B cell (primary cell): ENCODE measurements at regions of chr19 and their contacts with region 1.

Region 1: DNA sequence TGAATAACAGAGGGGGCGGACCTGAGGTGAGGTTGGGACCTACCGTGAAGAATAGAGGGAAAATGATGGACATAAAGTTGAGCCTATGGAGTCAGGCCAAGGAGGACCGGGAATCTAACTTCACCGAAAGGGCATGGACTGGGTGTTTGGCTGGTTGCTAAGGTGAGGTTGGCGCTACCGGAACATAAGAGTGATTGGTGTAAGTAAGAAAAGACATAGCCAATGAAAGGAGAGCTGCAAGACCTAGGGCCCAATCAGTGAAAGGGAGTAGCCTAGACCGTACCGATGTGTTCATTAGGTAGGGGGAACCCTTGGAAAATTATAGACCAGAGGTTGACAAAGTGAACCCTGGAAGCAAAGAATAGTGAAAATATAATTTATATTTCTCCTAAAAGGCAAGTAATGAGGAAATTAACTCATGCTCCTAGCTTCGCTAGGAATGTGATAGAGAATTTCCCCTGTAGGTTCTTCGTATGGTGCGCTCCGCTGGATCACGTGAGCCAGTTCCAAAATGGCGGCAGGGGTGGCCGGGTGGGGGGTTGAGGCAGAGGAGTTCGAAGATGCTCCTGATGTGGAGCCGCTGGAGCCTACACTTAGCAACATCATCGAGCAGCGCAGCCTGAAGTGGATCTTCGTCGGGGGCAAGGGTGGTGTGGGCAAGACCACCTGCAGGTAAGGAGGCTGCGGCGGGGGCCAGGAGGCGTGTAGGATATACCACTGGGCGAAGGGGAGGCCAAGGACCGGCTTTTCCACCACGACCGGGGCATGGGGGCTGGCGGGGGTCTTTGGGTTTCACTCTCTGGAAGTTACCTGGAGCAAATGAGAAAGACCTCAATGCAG is at the start of gene GET3:
- DNase-seq: peak; percentile 93
- ATAC-seq: peak; percentile 76
- H3K4me3 ChIP-seq: peak within 1 kb of the TSS; percentile 67 to 93 (median 86)
- H3K4me3 Mint-ChIP-seq: peak within 1 kb of the TSS; percentile 100
- H3K27ac ChIP-seq: peak within 1 kb of the TSS; percentile 72 to 94
- H3K27ac Mint-ChIP-seq: peak within 1 kb of the TSS; percentile 99
- H3K4me1 ChIP-seq: peaks cover 36 to 43% of the 10 kb centered on the region in 2 donors
- H3K4me1 Mint-ChIP-seq: peaks cover 39% of the 10 kb centered on the region
- H3K27me3 ChIP-seq: no peaks in the 10 kb centered on the region
- H3K27me3 Mint-ChIP-seq: no peaks in the 10 kb centered on the region
- CTCF ChIP-seq: no peak
- total RNA-seq, gene GET3: 30.7 and 37.2 TPM in 2 replicates

Region 2: DNA sequence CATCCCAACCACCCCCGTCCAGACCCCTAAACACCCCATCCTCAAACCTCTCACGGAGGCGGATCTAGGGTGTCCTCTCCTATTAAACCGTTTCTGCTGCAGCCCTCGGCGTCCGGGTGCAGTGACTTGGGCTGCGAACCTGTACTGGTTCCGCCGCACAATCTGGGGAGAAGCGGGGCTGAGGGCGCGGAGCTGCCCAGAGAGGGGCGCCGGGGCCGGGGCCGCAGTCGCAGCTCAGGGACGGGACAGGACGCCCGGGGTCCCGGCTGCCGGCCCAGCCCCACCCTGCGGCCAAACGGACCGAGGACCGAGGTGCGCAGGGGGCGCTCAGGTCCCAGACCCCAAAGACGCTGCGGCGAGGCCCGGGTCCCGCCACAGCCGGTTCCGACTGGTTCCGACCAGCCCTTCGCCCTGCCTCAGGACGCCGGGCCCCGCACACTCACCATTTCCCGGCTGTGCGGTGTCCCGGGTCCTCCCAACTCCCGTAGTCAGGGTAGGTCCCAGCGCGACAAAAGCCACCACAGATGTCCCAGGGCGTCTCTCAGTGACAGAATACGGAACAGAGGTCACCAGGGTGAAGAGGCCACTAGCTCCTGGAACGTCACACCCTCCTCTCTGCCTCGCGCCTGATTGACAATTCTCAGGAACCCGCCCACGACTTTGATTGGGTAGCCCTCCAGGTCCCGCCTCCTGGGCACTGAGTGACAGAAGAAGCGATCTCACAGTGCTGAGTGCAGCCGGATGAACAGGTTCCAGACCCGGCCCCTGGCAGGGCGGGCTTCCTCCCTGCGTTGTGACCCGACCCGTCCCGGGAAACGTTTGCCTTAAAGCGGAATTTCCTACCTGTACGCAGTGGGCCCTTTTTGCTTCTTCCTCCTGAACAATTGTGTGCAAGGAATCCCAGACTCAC is 442.7 kb before region 1 on chr19 and contains the start of gene ZNF44:
- CTCF ChIA-PET with region 1: no interaction called
- POLR2A ChIA-PET with region 1: no interaction called
- intact Hi-C with region 1: no loop called
- DNase-seq: peak; percentile 95
- ATAC-seq: peak; percentile 96
- H3K4me3 ChIP-seq: peak within 1 kb of the TSS; percentile 57 to 96 (median 91)
- H3K4me3 Mint-ChIP-seq: peak within 1 kb of the TSS; percentile 99
- H3K27ac ChIP-seq: peak within 1 kb of the TSS; percentile 82 to 89
- H3K27ac Mint-ChIP-seq: peak within 1 kb of the TSS; percentile 94
- H3K4me1 ChIP-seq: peaks cover 8 to 17% of the 10 kb centered on the region in 2 donors
- H3K4me1 Mint-ChIP-seq: peaks cover 31% of the 10 kb centered on the region
- H3K27me3 ChIP-seq: no peaks in the 10 kb centered on the region
- H3K27me3 Mint-ChIP-seq: no peaks in the 10 kb centered on the region
- CTCF ChIP-seq: no peak
- total RNA-seq, gene ZNF44: 27.8 and 28.0 TPM in 2 replicates

Region 3: GRCh38 chr19:12666265-12667048 is 70.8 kb before region 1 on chr19 and contains the starts of genes MAN2B1 and WDR83:
- CTCF ChIA-PET with region 1: interaction called, 10 read pairs
- POLR2A ChIA-PET with region 1: interaction called, 3 read pairs
- intact Hi-C with region 1: no loop called
- DNase-seq: peak; percentile 91
- ATAC-seq: peak; percentile 71
- H3K4me3 ChIP-seq: peak within 1 kb of the TSS; percentile 84 to 99 (median 94)
- H3K4me3 Mint-ChIP-seq: peak within 1 kb of the TSS; percentile 98
- H3K27ac ChIP-seq: peak within 1 kb of the TSS; percentile 95 to 99
- H3K27ac Mint-ChIP-seq: peak within 1 kb of the TSS; percentile 97
- H3K4me1 ChIP-seq: peaks cover 37 to 60% of the 10 kb centered on the region in 2 donors
- H3K4me1 Mint-ChIP-seq: peaks cover 67% of the 10 kb centered on the region
- H3K27me3 ChIP-seq: no peaks in the 10 kb centered on the region
- H3K27me3 Mint-ChIP-seq: no peaks in the 10 kb centered on the region
- CTCF ChIP-seq: no peak
- total RNA-seq, gene MAN2B1: 252 and 256 TPM in 2 replicates
- total RNA-seq, gene WDR83: 24.6 and 25.8 TPM in 2 replicates

Region 4: GRCh38 chr19:12722566-12723380 is 14.4 kb before region 1 on chr19:
- CTCF ChIA-PET with region 1: interaction called, 26 read pairs
- POLR2A ChIA-PET with region 1: interaction called, 29 read pairs
- intact Hi-C with region 1: loop called (anchors 1 kb)
- DNase-seq: peak; percentile 97
- ATAC-seq: peak; percentile 87
- H3K4me3 ChIP-seq: peak overlapping the region; percentile 60 to 83 (median 77)
- H3K4me3 Mint-ChIP-seq: peak overlapping the region; percentile 95
- H3K27ac ChIP-seq: peak overlapping the region; percentile 17 to 69
- H3K27ac Mint-ChIP-seq: peak overlapping the region; percentile 97
- H3K4me1 ChIP-seq: peaks cover 29 to 39% of the 10 kb centered on the region in 2 donors
- H3K4me1 Mint-ChIP-seq: peaks cover 39% of the 10 kb centered on the region
- H3K27me3 ChIP-seq: no peaks in the 10 kb centered on the region
- H3K27me3 Mint-ChIP-seq: no peaks in the 10 kb centered on the region
- CTCF ChIP-seq: no peak

Region 5: DNA sequence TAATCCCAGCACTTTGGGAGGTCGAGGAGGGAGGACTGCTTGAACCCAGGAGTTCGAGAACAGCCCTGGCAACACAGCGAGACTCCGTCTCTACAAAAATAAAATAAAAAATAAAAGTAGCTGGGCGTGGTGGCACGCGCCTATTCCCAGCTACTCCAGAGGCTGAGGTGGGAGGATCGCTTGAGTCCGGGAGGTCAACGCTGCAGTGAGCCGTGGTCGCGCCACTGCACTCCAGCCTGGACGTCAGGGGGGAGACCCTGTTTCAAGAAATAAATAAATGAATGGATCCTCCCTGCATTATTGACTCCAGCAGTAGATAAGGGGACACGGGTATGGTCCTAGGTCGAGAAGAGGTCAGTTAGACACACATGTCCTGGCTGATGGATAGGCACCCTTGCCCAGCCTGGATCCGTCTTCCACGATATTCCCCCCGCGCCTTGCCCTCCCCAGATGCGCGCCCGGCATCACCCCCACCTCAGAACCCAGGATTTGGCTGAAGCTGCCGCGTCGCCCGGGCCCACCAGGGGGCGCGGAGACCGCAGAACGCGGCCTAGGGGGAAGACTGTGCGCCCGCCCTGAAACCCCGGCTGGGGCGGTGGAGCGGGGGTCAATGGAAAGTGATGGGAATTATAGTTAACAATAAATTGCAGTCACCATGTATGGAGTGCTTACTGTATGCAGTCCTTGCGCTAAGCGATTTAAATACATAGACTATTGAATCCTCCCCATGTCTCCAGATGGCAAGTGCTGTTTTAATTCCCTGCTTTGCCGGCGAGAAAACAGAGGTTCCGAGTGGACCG is 40.2 kb after region 1 on chr19:
- CTCF ChIA-PET with region 1: interaction called, 3 read pairs
- POLR2A ChIA-PET with region 1: interaction called, 4 read pairs
- intact Hi-C with region 1: loop called (anchors 1 kb)
- DNase-seq: peak; percentile 90
- ATAC-seq: peak; percentile 29
- H3K4me3 ChIP-seq: peak overlapping the region; percentile 63 to 89 (median 75)
- H3K4me3 Mint-ChIP-seq: peak overlapping the region; percentile 88
- H3K27ac ChIP-seq: peak overlapping the region; percentile 83 to 86
- H3K27ac Mint-ChIP-seq: peak overlapping the region; percentile 84
- H3K4me1 ChIP-seq: peaks cover 27 to 47% of the 10 kb centered on the region in 2 donors
- H3K4me1 Mint-ChIP-seq: peaks cover 48% of the 10 kb centered on the region
- H3K27me3 ChIP-seq: no peaks in the 10 kb centered on the region
- H3K27me3 Mint-ChIP-seq: no peaks in the 10 kb centered on the region
- CTCF ChIP-seq: peak; percentile 99

Region 6: DNA sequence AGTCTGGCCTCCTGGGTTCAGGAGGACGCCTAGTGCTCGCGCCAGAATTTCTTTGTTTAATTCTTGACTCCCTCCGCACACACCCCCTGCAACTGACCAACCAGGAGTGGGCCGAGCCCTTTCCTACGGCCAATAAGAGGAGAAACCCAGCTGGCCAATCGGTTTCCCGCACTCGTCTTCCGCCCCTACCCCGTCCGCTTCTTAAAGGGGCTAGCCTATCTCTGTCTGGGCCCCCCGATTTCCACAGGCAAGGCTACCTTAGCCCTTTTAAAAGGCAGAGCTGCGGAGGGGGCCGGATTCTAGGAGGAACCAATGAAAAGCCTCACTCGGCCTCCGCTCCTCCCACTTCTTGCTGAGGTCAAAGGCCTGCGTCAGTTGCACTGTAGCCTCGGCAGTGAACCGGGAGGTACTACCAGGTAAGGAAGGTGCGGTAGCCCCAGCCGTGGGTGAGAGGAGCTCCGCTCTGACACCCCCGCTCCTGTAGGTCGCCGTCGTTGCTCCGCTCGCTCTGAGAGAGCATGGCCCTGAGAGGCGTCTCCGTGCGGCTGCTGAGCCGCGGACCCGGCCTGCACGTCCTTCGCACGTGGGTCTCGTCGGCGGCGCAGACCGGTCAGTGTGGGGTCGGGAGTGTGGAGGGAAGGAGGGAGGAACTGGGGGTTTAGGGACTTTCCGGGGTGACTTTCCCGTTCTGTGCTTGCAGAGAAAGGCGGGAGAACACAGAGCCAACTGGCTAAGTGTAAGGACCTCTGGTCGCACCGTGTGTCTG is 153.8 kb after region 1 on chr19 and contains the start of gene GCDH:
- CTCF ChIA-PET with region 1: no interaction called
- POLR2A ChIA-PET with region 1: no interaction called
- intact Hi-C with region 1: loop called (anchors 1 kb)
- DNase-seq: peak; percentile 98
- ATAC-seq: peak; percentile 91
- H3K4me3 ChIP-seq: peak within 1 kb of the TSS; percentile 51 to 92 (median 78)
- H3K4me3 Mint-ChIP-seq: peak within 1 kb of the TSS; percentile 99
- H3K27ac ChIP-seq: peak within 1 kb of the TSS; percentile 80 to 83
- H3K27ac Mint-ChIP-seq: peak within 1 kb of the TSS; percentile 95
- H3K4me1 ChIP-seq: peaks cover 15 to 20% of the 10 kb centered on the region in 2 donors
- H3K4me1 Mint-ChIP-seq: peaks cover 31% of the 10 kb centered on the region
- H3K27me3 ChIP-seq: no peaks in the 10 kb centered on the region
- H3K27me3 Mint-ChIP-seq: no peaks in the 10 kb centered on the region
- CTCF ChIP-seq: no peak
- total RNA-seq, gene GCDH: 61.2 and 63.2 TPM in 2 replicates